Adrenal gland (tissue), 19 donors: ENCODE measurements at regions of chr1 and their contacts with region 1.

Region 1: DNA sequence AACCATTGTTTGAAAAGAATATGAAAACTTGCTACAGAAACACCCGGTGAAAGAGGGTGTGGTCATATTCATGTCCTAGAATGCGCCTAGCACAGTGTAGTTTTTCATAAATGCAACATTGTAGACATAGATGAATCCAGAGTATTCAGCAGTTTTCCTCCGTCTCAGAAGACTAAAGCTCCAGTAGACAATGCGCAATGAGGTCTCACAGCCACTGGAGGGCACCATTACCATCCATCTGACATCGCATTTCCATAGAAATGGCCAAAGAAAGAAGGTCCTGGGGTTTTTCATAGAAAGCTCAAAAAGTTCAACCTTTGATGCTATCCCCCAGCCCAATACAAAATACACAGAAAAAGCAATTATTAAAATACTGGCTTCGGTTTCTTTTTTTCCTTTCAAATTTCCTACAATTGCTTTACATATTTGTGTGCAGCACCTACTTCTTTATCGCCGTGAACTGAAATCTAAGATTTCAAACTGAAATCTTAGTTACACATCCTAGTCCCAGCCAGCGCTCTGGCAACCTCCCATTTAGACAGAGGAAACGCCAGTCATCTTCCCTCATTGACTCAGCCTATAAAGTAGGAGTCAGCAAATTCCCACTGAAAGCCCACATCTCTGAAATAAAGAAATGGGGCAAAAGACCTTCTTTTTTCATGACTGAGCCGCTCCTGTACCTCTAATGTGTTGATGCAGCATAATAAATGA is 3.9 kb upstream of the CD58 start:
- DNase-seq: peak; percentile 51 to 88 (median 72)
- H3K4me3 ChIP-seq: no peak overlapping the region
- H3K27ac ChIP-seq: no peak overlapping the region
- H3K4me1 ChIP-seq: peaks cover 0 to 4% of the 10 kb centered on the region in 2 donors
- H3K27me3 ChIP-seq: no peaks in the 10 kb centered on the region
- CTCF ChIP-seq: peak; percentile 76 to 88 (median 86)
- POLR2A ChIP-seq: no peak

Region 2: DNA sequence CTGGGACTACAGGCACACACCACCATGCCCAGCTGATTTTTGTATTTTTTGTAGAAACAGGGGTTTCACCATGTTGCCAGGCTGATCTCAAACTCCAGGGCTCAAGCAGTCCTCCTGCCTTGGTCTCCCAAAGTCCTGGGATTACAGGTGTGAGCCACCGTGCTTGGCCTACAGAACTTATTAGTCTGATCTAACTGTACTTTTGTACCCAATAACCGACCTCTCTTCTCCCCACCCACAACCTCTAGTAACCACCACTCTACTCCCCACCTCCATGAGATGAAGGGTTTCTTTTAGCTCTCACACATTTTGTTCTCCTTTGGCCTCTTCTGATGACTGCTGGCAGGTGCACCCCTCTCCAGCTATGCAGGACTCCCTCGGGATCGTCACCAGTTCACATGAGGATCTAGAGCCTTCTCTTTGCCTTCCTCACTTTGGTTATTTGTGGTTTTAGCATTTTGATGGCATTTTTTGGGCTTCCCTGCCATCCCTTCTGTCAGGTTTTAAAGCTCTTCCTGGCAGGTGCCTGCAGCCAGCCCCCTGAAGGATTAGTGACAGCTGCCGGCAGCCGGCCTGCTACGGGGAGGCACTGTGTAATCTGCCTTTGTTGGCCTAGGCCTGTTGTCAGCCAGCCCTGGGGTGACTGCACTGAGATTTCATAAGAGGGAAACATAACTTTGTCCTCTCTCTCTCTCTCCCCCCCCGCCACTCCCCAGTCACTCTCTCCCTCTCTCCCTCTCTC is 301.5 kb before region 1 on chr1:
- intact Hi-C with region 1: no loop called
- DNase-seq: no peak
- H3K4me3 ChIP-seq: no peak overlapping the region
- H3K27ac ChIP-seq: no peak overlapping the region
- H3K4me1 ChIP-seq: no peaks in the 10 kb centered on the region
- H3K27me3 ChIP-seq: no peaks in the 10 kb centered on the region
- CTCF ChIP-seq: no peak
- POLR2A ChIP-seq: no peak

Region 3: DNA sequence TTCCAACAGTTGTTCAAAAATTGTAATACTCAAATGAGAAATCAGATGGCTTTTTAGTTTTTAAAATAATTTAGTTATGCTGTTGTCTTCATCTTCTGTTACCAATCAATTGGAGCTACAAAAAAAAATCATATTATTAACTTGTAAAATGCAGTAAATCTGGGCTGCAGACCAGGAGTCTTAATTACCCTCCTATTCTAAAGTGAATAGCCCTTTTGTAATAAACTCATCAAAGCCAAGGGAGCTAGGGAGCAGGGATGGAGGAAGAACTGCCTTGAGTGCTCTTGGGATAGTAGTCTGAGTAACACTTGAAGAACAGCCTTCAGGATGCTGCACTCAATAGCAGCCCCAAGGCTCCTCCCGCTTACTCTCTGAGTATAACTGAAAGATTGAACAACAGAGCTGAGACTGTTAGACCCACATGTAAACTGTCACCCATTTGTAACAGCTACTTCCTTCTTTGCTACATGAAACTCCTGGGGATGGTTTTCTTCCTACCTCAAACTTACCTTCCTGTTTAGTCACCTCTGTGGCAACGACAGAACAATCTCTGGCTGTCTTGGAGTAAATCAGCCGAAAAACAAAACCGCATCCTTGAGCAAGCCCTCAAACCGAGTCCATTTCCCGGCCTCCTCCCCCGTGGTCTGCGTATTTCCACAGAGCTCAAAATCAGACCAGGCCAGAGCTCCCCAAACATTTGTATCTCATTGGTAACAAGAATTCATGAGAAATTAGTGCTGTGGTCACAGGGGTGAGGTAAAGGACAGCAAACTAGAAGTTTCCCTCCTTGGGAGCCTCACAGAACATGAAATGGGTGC is 59.8 kb before region 1 on chr1:
- intact Hi-C with region 1: no loop called
- DNase-seq: no peak
- H3K4me3 ChIP-seq: no peak overlapping the region
- H3K27ac ChIP-seq: peak overlapping the region in 1 of 5 donors; percentile 52
- H3K4me1 ChIP-seq: no peaks in the 10 kb centered on the region
- H3K27me3 ChIP-seq: no peaks in the 10 kb centered on the region
- CTCF ChIP-seq: no peak
- POLR2A ChIP-seq: no peak

Region 4: GRCh38 chr1:116628448-116628847 is 53.7 kb after region 1 on chr1:
- intact Hi-C with region 1: no loop called
- DNase-seq: no peak
- H3K4me3 ChIP-seq: no peak overlapping the region
- H3K27ac ChIP-seq: no peak overlapping the region
- H3K4me1 ChIP-seq: no peaks in the 10 kb centered on the region
- H3K27me3 ChIP-seq: no peaks in the 10 kb centered on the region
- CTCF ChIP-seq: no peak
- POLR2A ChIP-seq: no peak

Region 5: GRCh38 chr1:116674011-116674531 is 99.3 kb after region 1 on chr1:
- intact Hi-C with region 1: loop called in 1 of 2 experiments (anchors 5 kb)
- DNase-seq: no peak
- H3K4me3 ChIP-seq: no peak overlapping the region
- H3K27ac ChIP-seq: no peak overlapping the region
- H3K4me1 ChIP-seq: no peaks in the 10 kb centered on the region
- H3K27me3 ChIP-seq: no peaks in the 10 kb centered on the region
- CTCF ChIP-seq: no peak
- POLR2A ChIP-seq: no peak